Mammary epithelial cell (primary cell): ENCODE measurements at regions of chr3 and their contacts with region 1.

Region 1: DNA sequence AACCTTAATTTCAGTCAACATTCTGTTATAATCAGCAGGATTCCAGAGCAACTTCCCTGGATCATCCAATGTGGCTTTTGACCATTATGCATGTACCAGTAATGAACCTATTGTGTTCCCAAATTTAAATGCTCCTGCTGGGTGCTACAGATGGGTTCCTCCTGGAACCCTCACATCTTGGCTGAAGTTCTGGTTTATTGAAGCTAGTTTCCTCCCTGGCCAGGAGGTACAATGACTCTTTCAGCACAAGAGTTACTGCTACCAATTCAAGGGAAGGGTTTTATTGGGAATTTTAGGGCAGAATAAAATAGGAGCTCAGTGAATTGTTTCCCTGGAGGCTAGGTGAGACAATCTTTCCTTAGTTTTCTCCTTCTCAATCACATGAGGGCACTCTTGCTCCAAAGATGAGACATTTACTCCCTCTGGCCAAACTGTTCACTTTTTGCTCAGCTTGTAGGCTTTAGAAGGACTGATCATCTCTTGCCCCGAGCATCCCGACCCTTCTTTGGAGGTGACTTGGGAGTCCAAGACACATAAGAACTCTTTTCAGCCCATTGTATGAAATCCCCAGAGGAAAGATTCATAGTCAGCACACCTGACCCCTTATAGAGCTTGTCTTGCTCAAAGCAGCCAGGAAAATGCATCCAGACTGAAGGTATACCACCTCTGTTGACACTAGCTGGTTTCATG is 8.8 kb upstream of the NPHP3 start:
- DNase-seq: peak; percentile 41
- H3K4me3 ChIP-seq: no peak overlapping the region
- H3K27ac ChIP-seq: no peak overlapping the region
- H3K4me1 ChIP-seq: no peaks in the 10 kb centered on the region
- H3K27me3 ChIP-seq: peaks cover 8% of the 10 kb centered on the region
- CTCF ChIP-seq: peak; percentile 48 to 59

Region 2: GRCh38 chr3:132772252-132772651 is 41.2 kb after region 1 on chr3:
- CTCF ChIA-PET with region 1: no interaction called
- dilution Hi-C with region 1: no loop called
- in situ Hi-C with region 1: no loop called
- intact Hi-C with region 1: no loop called
- DNase-seq: no peak
- H3K4me3 ChIP-seq: no peak overlapping the region
- H3K27ac ChIP-seq: no peak overlapping the region
- H3K4me1 ChIP-seq: no peaks in the 10 kb centered on the region
- H3K27me3 ChIP-seq: no peaks in the 10 kb centered on the region
- CTCF ChIP-seq: no peak

Region 3: GRCh38 chr3:133040696-133041523 is 309.9 kb after region 1 on chr3:
- CTCF ChIA-PET with region 1: interaction called, 4 read pairs
- dilution Hi-C with region 1: no loop called
- in situ Hi-C with region 1: loop called in 1 of 2 experiments (anchors 25 kb)
- intact Hi-C with region 1: loop called (anchors 1 kb)
- DNase-seq: peak; percentile 44
- H3K4me3 ChIP-seq: no peak overlapping the region
- H3K27ac ChIP-seq: no peak overlapping the region
- H3K4me1 ChIP-seq: peaks cover 10% of the 10 kb centered on the region
- H3K27me3 ChIP-seq: peaks cover 19% of the 10 kb centered on the region
- CTCF ChIP-seq: peak; percentile 74 to 86

Region 4: DNA sequence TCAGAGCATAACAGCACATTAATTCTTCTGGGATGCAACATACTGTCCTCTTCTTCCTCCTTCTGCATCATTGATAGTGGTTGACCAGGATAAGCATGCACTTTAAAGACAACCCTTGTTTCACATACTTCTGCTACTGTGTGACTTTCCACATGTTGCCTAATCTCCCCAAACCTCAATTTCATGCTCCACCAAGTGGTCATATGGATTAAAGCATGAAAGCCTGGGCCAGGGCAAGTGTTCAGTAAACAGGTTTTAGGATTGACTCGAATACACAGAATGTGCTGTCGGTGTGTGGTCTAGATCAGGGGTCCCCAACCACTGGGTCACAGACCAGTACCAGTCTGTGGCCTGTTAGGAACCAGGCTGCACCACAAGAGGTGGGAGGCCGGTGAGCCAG is 646.4 kb after region 1 on chr3:
- CTCF ChIA-PET with region 1: no interaction called
- dilution Hi-C with region 1: loop called (anchors 5 kb)
- in situ Hi-C with region 1: loop called (anchors 5 kb)
- intact Hi-C with region 1: loop called (anchors 1 kb)
- DNase-seq: peak; percentile 42
- H3K4me3 ChIP-seq: no peak overlapping the region
- H3K27ac ChIP-seq: no peak overlapping the region
- H3K4me1 ChIP-seq: no peaks in the 10 kb centered on the region
- H3K27me3 ChIP-seq: peaks cover 2% of the 10 kb centered on the region
- CTCF ChIP-seq: peak; percentile 48 to 68

Region 5: GRCh38 chr3:133384331-133385027 is 653.4 kb after region 1 on chr3:
- CTCF ChIA-PET with region 1: no interaction called
- dilution Hi-C with region 1: loop called (anchors 5 kb)
- in situ Hi-C with region 1: loop called (anchors 5 kb)
- intact Hi-C with region 1: loop called (anchors 1 kb)
- DNase-seq: peak; percentile 55
- H3K4me3 ChIP-seq: no peak overlapping the region
- H3K27ac ChIP-seq: no peak overlapping the region
- H3K4me1 ChIP-seq: peaks cover 16% of the 10 kb centered on the region
- H3K27me3 ChIP-seq: peaks cover 2% of the 10 kb centered on the region
- CTCF ChIP-seq: peak; percentile 58 to 88

Region 6: GRCh38 chr3:133426721-133427120 is 695.7 kb after region 1 on chr3:
- CTCF ChIA-PET with region 1: interaction called, 7 read pairs
- dilution Hi-C with region 1: no loop called
- in situ Hi-C with region 1: loop called in 1 of 2 experiments (anchors 10 kb)
- intact Hi-C with region 1: loop called (anchors 1 kb)
- DNase-seq: peak; percentile 46
- H3K4me3 ChIP-seq: no peak overlapping the region
- H3K27ac ChIP-seq: no peak overlapping the region
- H3K4me1 ChIP-seq: peaks cover 5% of the 10 kb centered on the region
- H3K27me3 ChIP-seq: no peaks in the 10 kb centered on the region
- CTCF ChIP-seq: no peak

Region 7: GRCh38 chr3:133805527-133806475 is 1074.8 kb after region 1 on chr3 and contains the start of gene SRPRB:
- CTCF ChIA-PET with region 1: no interaction called
- dilution Hi-C with region 1: no loop called
- in situ Hi-C with region 1: no loop called
- intact Hi-C with region 1: loop called (anchors 5 kb)
- DNase-seq: peak; percentile 94
- H3K4me3 ChIP-seq: peak within 1 kb of the TSS; percentile 68 to 86 (median 78)
- H3K27ac ChIP-seq: peak within 1 kb of the TSS; percentile 66
- H3K4me1 ChIP-seq: peaks cover 4% of the 10 kb centered on the region
- H3K27me3 ChIP-seq: no peaks in the 10 kb centered on the region
- CTCF ChIP-seq: no peak
- total RNA-seq, gene SRPRB: 79.0 to 92.6 TPM

Region 8: DNA sequence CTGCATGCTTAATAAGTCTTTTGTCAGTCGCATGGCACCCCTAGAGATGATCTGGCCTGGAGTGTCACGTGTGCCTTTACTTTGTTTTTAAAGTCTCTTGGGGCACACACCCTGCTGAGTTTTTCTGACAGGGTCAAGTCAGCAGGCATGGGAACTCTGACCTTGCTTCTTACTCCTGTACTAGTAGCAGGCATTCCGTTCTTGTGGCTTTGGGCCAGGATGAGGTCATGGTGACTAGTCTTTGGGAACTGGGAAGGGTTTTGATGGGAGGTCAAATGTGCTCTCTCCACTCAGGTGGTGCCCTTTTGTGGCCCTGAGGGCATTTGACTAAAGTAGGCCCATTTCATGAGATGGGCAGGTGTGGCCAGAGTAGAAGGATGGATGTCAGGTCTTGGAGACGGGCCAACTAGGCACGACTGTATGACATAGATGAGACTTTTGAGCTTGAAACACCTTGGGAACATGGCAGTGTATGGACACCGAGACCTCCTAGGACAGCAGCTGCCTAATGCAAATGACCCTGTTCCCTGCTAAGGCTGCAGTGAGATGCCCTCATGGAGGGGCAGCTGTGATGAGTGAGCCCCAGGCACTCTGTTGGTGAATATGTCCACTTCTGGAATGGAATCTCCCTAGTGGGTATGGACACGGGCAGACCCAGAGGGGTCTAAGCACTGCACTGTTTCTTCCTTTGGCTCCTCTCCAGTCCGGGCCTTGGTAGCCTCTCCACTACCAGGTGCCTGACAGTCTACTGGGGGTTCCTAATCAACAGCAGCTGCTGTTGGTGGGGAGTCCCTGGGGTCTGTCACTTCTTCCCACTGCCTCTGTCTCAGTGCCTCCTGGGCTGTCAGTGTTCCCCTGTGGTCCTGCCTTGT is 1091.0 kb after region 1 on chr3:
- CTCF ChIA-PET with region 1: interaction called, 4 read pairs
- dilution Hi-C with region 1: no loop called
- in situ Hi-C with region 1: no loop called
- intact Hi-C with region 1: loop called (anchors 2 kb)
- DNase-seq: peak; percentile 89
- H3K4me3 ChIP-seq: no peak overlapping the region
- H3K27ac ChIP-seq: no peak overlapping the region
- H3K4me1 ChIP-seq: peaks cover 36% of the 10 kb centered on the region
- H3K27me3 ChIP-seq: no peaks in the 10 kb centered on the region
- CTCF ChIP-seq: peak; percentile 41 to 53